GM12878 (cell line): ENCODE measurements at regions of chr2 and their contacts with region 1.

Region 1: GRCh38 chr2:232382331-232383225 is 4.0 kb downstream of the ALPP start:
- DNase-seq: no peak
- ATAC-seq: no peak
- H3K4me3 ChIP-seq: no peak overlapping the region
- H3K27ac ChIP-seq: no peak overlapping the region
- H3K4me1 ChIP-seq: no peaks in the 10 kb centered on the region
- H3K27me3 ChIP-seq: peaks cover 0 to 7% of the 10 kb centered on the region in 2 experiments; a peak in 2 of 4 replicates
- CTCF ChIP-seq: no peak
- EP300 ChIP-seq: no peak
- POLR2A ChIP-seq: no peak
- RAD21 ChIP-seq: no peak

Region 2: DNA sequence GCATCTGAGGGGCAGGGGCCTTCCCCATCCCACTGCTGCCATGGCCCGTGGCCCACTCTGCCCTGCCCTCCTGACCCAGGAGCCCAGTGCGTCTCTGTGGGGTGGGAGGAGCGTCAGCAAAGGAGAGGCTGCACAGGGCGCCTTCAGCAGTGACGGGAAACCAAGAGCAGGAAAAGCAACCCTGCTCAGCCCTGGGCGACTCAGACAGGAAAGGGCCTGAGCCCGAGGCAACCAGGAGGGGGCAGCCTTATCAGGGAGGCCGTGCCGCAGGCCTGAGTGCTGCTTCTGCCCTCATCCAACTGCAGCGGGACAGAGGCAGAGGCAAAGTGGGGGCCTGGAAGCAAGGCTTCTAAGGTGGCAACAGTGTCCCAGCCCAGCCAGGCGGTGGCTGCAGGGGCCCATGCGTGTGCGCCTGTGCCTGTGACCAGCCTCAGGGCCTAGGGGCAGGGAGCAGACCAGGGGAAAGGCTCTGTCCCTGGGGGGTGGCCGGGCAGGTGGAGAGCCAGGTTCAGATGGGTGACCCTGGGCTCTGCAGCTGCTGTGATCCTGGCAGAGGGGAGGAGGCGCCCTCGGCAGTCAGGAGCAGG is 50.1 kb after region 1 on chr2:
- CTCF ChIA-PET with region 1: no interaction called
- POLR2A ChIA-PET with region 1: no interaction called
- RAD21 ChIA-PET with region 1: no interaction called
- SMC1A ChIA-PET with region 1: no interaction called
- in situ Hi-C with region 1: loop called (anchors 5 kb)
- intact Hi-C with region 1: no loop called
- DNase-seq: no peak
- ATAC-seq: peak; percentile 55
- H3K4me3 ChIP-seq: no peak overlapping the region
- H3K27ac ChIP-seq: no peak overlapping the region
- H3K4me1 ChIP-seq: no peaks in the 10 kb centered on the region
- H3K27me3 ChIP-seq: no peaks in the 10 kb centered on the region; a peak in 2 of 4 replicates
- CTCF ChIP-seq: no peak
- EP300 ChIP-seq: no peak
- POLR2A ChIP-seq: no peak
- RAD21 ChIP-seq: no peak